ENCODE measurements at regions of chr20 and their contacts with region 1.

Region 1: DNA sequence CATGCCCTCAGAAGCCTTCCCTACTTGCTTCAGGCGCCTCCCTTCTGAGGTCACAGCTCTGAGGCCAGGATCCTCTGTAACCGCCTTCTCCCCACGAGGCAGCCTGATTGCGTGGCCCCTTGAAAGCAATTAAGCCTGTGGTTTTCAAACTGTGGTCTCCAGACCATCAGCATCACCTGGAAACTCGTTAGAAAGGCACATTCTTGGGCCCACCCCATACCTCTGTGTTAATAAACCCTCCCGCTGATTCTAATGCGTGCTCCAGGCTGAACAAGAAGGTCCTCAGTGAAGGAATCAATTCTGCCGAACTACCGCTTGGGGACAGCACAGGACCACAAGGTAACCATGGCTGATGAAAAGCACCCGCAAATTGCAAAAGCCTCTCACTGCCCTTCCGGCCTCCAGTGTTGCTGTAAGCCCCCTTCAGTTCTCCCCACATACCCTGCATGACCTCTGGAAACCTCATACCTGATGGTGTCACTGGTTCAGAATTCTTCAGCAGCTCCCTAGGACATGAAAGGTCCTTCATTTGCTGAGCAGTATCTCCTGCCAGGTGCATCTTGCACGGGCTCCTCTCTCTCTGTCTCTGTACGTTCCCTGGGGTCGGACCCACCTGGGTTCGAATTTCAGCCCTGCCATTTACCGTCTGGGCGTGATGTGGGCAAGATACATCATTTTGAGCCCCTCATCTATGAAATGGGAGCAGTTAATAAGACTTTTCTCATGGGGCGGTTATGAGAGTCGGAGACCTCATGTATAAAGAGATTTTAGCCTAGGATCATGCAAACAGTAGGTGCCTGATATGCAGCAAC is 93.3 kb upstream of the RNF24 start:
- DNase-seq: peak; percentile 60 to 67 (median 63)
- H3K4me3 ChIP-seq: no peak overlapping the region
- H3K4me3 Mint-ChIP-seq: no peak overlapping the region
- H3K27ac ChIP-seq: no peak overlapping the region
- H3K27ac Mint-ChIP-seq: no peak overlapping the region
- H3K4me1 ChIP-seq: no peaks in the 10 kb centered on the region
- H3K4me1 Mint-ChIP-seq: peaks cover 0 to 6% (median 1%) of the 10 kb centered on the region in 4 donors
- H3K27me3 ChIP-seq: no peaks in the 10 kb centered on the region
- H3K27me3 Mint-ChIP-seq: peaks cover 2 to 13% of the 10 kb centered on the region in 2 donors

Region 2: DNA sequence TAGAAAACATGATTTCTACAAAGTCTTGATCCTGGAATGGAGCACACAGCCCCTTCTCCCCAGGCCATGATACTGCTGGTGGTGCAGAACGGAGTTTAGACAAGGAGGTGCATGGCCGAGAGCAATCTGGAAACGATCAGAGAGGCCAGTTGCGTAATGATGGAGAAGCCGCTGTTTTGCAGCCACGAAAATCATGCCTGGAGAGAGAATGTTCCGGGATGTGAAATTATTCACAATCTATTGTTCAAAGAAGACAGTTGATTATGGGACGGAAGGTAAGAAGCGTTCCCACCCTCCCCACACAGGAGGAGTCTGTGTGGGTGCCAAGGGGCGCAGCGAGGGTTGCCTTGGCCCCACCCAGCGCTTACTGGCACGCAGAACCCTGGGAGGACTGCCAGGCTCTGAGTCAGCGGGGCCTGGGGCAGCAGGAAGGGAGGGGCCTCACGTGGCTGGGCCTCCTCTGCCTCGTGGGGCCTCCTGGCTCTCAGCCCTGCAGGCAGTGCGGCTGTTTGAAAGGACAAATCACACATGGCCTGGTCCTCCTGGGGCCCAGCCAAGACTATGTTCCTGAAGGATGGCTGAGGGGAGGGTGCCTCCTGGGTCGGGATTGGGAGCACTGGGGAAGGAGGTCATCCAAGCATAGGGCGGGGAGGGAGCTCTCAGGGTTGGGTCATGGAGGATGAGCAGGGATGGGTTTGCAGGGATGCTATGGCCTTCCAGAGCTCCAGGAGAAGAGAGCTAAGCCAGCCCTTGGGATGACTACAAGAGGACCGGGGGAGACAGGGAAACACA is 297.0 kb before region 1 on chr20:
- CTCF ChIA-PET with region 1: no interaction called
- POLR2A ChIA-PET with region 1: no interaction called
- intact Hi-C with region 1: no loop called
- DNase-seq: peak; percentile 92 to 97 (median 94)
- H3K4me3 ChIP-seq: peak overlapping the region in 1 of 2 donors; percentile 54
- H3K4me3 Mint-ChIP-seq: peak overlapping the region; percentile 83 to 94 (median 89)
- H3K27ac ChIP-seq: peak overlapping the region; percentile 89
- H3K27ac Mint-ChIP-seq: peak overlapping the region; percentile 97 to 100 (median 99)
- H3K4me1 ChIP-seq: peaks cover 90% of the 10 kb centered on the region
- H3K4me1 Mint-ChIP-seq: peaks cover 53 to 83% (median 69%) of the 10 kb centered on the region in 4 donors
- H3K27me3 ChIP-seq: no peaks in the 10 kb centered on the region
- H3K27me3 Mint-ChIP-seq: no peaks in the 10 kb centered on the region

Region 3: DNA sequence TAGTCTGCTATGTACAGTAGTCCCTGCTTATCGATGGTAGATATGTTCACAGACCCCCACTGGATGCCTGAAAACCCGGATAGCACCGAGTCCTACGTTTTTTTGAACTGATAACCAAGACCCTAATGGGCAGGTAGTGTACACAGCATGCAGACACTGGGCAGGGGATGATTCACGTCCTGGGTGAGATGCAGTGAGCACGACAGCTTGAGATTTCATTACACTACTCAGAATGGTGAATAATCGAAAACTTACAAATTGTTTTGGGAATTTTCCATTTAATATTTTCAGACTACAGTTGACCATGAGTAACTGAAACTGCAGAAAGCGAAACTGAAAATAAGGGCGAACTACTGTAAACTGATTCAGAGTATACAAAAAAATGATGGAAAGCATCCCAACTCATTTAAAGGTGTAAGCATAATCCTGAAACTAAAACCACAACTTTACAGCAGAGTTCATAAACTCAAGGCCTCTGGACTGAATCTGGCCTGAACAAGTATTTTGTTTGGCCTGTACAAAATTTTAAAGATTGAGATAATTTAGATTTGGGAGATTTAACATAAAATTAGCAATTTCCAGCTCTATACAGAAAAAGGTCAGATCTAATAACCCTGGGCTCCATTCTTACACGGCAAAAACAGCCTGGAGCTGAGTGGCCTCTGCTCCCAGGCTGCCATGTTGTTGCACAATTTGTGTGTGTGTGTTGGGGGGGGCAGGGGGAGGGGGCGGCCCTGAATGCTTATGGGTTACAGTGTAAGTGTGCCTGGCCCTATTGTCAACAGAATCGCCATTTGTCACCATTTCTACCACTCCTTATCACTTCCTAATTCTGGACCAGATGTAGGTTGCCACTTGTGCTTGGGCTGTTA is 128.2 kb before region 1 on chr20:
- CTCF ChIA-PET with region 1: no interaction called
- POLR2A ChIA-PET with region 1: no interaction called
- intact Hi-C with region 1: no loop called
- DNase-seq: peak; percentile 10 to 45 (median 23)
- H3K4me3 ChIP-seq: peak overlapping the region; percentile 19 to 55
- H3K4me3 Mint-ChIP-seq: peak overlapping the region; percentile 76 to 89 (median 88)
- H3K27ac ChIP-seq: peak overlapping the region; percentile 45
- H3K27ac Mint-ChIP-seq: peak overlapping the region; percentile 90 to 94 (median 91)
- H3K4me1 ChIP-seq: peaks cover 23% of the 10 kb centered on the region
- H3K4me1 Mint-ChIP-seq: peaks cover 15 to 29% (median 22%) of the 10 kb centered on the region in 4 donors
- H3K27me3 ChIP-seq: no peaks in the 10 kb centered on the region
- H3K27me3 Mint-ChIP-seq: no peaks in the 10 kb centered on the region

Region 4: GRCh38 chr20:4167261-4168021 is 58.7 kb after region 1 on chr20:
- CTCF ChIA-PET with region 1: interaction called, 16 read pairs
- POLR2A ChIA-PET with region 1: no interaction called
- intact Hi-C with region 1: no loop called
- DNase-seq: no peak
- H3K4me3 ChIP-seq: no peak overlapping the region
- H3K4me3 Mint-ChIP-seq: no peak overlapping the region
- H3K27ac ChIP-seq: no peak overlapping the region
- H3K27ac Mint-ChIP-seq: peak overlapping the region in 3 of 7 donors; percentile 19 to 49 (median 24)
- H3K4me1 ChIP-seq: peaks cover 6% of the 10 kb centered on the region
- H3K4me1 Mint-ChIP-seq: peaks cover 3 to 19% (median 10%) of the 10 kb centered on the region in 4 donors
- H3K27me3 ChIP-seq: no peaks in the 10 kb centered on the region
- H3K27me3 Mint-ChIP-seq: no peaks in the 10 kb centered on the region